Adrenal gland (tissue), 19 donors: ENCODE measurements at regions of chr20 and their contacts with region 1.

Region 1: DNA sequence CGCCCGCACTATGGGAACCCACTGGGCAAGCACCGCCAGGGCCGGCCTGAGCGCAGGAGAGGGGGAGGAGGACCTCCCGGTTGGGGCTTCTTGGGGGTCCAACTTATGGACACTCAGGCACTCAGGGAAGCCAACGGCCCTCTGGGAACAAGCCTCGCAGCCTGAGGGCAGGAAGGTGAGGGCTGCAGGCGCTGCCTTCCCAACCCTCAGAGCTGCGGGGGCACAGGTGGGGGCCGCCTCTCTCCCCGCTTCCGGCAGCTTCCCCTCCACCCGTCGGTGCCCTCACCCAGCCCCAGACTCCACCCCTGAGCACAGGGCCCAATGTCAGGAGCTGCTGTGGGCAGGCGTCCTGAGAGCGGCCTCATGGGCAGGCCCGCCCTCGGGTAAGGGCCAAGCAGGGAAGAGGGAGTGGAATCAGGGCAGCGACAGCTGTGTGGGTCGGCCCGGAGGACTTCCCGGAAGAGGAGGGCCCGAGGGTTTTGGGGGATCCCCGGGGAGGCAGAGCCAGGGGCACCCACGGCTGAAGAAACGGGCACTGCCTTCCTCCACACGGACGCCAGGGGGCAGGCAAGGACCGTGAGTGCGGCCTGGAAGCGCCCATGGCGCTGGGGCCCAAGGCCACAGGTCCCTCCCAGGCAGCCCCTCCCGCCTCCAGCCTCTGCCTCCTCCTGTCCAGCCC is 488 bp upstream of the PTK6 start:
- DNase-seq: peak; percentile 78 to 92 (median 84)
- H3K4me3 ChIP-seq: peak overlapping the region in 1 of 4 donors; percentile 40
- H3K27ac ChIP-seq: peak overlapping the region in 2 of 5 donors; percentile 30 to 65
- H3K4me1 ChIP-seq: peaks cover 0 to 7% of the 10 kb centered on the region in 2 donors
- H3K27me3 ChIP-seq: peaks cover 7% of the 10 kb centered on the region
- CTCF ChIP-seq: peak; percentile 90 to 99 (median 96)
- POLR2A ChIP-seq: no peak

Region 2: GRCh38 chr20:63864847-63865640 is 327.4 kb after region 1 on chr20 and contains the start of gene TPD52L2:
- intact Hi-C with region 1: loop called in 1 of 2 experiments (anchors 10 kb)
- DNase-seq: peak; percentile 98 to 100 (median 99)
- H3K4me3 ChIP-seq: peak within 1 kb of the TSS; percentile 31 to 91 (median 78)
- H3K27ac ChIP-seq: peak within 1 kb of the TSS; percentile 90 to 98 (median 96)
- H3K4me1 ChIP-seq: peaks cover 4 to 22% of the 10 kb centered on the region in 2 donors
- H3K27me3 ChIP-seq: no peaks in the 10 kb centered on the region
- CTCF ChIP-seq: no peak
- POLR2A ChIP-seq: peak; percentile 89 to 95
- total RNA-seq, gene TPD52L2: 81.9 to 125 (median 112) TPM

Region 3: GRCh38 chr20:63973636-63974402 is 436.2 kb after region 1 on chr20:
- intact Hi-C with region 1: loop called (anchors 2 to 5 kb)
- DNase-seq: peak; percentile 84 to 94 (median 90)
- H3K4me3 ChIP-seq: peak overlapping the region in 1 of 4 donors; percentile 47
- H3K27ac ChIP-seq: peak overlapping the region in 2 of 5 donors; percentile 45 to 50
- H3K4me1 ChIP-seq: peaks cover 8 to 20% of the 10 kb centered on the region in 2 donors
- H3K27me3 ChIP-seq: no peaks in the 10 kb centered on the region
- CTCF ChIP-seq: peak; percentile 95 to 100 (median 98)
- POLR2A ChIP-seq: no peak

Region 4: DNA sequence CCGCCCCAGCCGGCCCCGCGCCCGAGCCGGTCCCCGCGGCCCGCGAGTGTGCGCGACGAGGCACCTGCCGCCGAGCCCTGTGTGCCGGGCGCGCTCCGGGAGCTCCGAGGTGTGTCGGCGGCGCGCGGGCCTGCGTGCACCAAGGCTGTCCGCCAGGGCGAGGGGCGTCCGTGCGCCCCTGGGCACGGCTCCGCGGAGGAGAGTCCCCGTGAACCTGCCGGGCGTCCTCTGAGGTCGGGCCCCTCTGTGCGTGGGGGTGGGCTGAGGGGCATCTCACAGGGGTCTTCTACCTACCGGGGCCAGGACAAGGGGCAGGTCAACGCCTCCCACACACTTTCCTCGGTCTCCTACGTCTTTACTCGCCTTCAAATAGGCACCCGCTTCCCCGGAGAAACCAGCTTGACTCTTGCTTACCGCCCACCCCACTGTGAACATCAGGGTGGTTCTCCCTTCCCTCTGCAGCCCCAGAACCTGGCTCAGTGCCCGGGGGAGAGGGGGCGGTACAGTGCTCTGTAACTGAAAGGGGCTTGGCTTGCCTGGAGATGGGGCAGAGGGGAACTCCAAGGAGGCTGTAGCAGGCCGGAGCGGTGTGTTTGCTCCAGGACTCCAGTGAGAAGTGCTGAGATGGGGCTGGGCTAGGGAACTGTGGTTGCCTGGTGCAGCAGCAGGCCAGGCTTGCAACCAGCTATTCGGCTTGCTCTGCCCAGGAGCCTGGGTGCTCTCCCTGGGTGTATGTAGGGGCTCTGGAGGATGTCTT is 442.1 kb after region 1 on chr20 and contains the start of gene SAMD10:
- intact Hi-C with region 1: loop called in 1 of 2 experiments (anchors 5 kb)
- DNase-seq: peak in 5 of 7 donors; percentile 42 to 67 (median 43)
- H3K4me3 ChIP-seq: peak within 1 kb of the TSS in 3 of 4 donors; percentile 18 to 96 (median 58)
- H3K27ac ChIP-seq: peak within 1 kb of the TSS; percentile 30 to 94 (median 70)
- H3K4me1 ChIP-seq: peaks cover 31 to 40% of the 10 kb centered on the region in 2 donors
- H3K27me3 ChIP-seq: no peaks in the 10 kb centered on the region
- CTCF ChIP-seq: peak in 2 of 6 experiments; percentile 33 to 51
- POLR2A ChIP-seq: no peak
- total RNA-seq, gene SAMD10: 1.1 to 8.8 (median 4.5) TPM